ENCODE measurements at regions of chr14 and their contacts with region 1.

Region 1: DNA sequence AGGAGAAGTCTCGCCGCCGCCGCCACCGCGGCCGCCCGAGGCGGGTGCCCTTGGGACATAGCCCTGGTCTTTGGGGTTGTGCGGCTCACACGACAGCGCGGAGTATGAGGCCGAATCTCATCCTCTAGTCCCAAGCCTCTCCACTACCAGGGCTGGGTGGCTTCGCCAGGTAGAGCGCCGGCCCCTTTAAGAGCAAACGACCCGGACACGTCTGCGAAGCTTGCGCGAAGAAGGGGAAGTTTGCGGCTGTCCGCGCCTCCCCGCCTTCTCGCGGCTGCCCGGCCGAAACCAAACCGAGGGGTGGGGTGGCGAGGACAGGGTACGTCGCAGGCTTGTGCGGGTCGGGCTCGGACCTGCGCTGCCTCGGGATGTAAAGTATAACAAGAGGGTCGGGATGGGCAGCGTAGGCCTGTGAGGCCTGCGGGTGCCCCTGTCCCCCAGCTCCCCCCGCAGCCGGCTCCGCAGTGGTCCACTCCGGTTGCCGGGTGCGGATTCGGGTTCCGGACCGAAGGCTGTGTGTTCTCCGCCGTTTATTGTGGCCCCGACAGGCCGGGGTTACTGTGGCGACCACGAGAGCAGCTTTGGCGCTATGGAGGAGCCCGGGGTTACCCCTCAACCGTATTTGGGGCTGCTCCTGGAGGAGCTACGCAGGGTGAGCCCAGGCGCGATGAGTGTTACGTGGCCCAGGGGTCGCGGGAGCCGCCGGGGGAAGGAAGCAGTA is 33.3 kb downstream of the MIA2 start:
- DNase-seq: no peak
- ATAC-seq: peak; percentile 92
- H3K4me3 ChIP-seq: peak overlapping the region; percentile 92
- H3K27ac ChIP-seq: peak overlapping the region; percentile 93
- H3K4me1 ChIP-seq: peaks cover 9% of the 10 kb centered on the region
- H3K27me3 ChIP-seq: no peaks in the 10 kb centered on the region
- CTCF ChIP-seq: no peak
- EP300 ChIP-seq: peak in 1 of 2 experiments; percentile 29; a peak in 1 of 4 replicates
- POLR2A ChIP-seq: peak; percentile 82
- RAD21 ChIP-seq: no peak

Region 2: GRCh38 chr14:39114073-39114838 is 152.8 kb before region 1 on chr14 and contains the start of gene GEMIN2:
- CTCF ChIA-PET with region 1: interaction called, 3 read pairs
- POLR2A ChIA-PET with region 1: no interaction called
- RAD21 ChIA-PET with region 1: no interaction called
- SMC1A ChIA-PET with region 1: no interaction called
- in situ Hi-C with region 1: no loop called
- intact Hi-C with region 1: loop called (anchors 10 kb)
- DNase-seq: peak; percentile 89
- ATAC-seq: peak; percentile 94
- H3K4me3 ChIP-seq: peak within 1 kb of the TSS; percentile 73
- H3K27ac ChIP-seq: peak within 1 kb of the TSS; percentile 64
- H3K4me1 ChIP-seq: peaks cover 15% of the 10 kb centered on the region
- H3K27me3 ChIP-seq: no peaks in the 10 kb centered on the region
- CTCF ChIP-seq: no peak
- EP300 ChIP-seq: no peak
- POLR2A ChIP-seq: peak; percentile 91
- RAD21 ChIP-seq: no peak
- polyA plus RNA-seq, gene GEMIN2: 51.5 to 69.3 TPM

Region 3: DNA sequence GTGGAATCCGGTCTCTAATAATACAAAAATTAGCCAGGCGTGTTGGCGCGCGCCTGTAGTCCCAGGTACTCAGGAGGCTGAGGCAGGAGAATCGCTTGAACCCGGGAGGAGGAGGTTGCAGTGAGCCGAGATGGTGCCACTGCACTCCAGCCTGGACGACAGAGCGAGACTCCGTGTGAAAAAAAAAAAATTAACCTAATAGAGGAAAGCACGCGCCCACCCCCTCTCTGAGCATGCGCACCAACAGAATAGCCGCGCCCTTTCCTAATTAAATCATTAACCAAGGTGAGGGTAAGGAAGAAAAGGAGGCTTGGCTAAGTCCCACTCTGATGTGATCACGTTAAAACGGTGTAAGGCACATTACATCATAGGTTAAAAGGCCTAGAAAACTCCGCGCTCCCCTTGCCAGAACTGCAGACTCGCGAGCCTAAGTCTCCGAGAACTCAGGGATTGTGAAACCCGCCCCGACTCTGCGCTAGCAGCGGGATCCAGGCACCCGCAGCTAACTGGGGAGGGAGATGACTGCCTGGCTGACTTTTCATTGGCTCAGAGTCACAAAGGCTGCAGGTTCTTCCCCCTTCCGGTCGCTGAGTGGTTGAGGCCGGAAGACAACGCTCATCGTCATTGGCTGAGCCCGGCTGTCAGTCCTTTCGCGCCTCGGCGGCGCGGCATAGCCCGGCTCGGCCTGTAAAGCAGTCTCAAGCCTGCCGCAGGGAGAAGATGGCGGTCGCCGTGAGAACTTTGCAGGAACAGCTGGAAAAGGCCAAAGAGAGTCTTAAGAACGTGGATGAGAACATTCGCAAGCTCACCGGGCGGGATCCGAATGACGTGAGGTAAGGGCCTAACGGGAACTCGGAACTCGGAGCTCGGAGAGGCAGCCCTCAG is 92.2 kb before region 1 on chr14 and contains the start of gene PNN:
- CTCF ChIA-PET with region 1: no interaction called
- POLR2A ChIA-PET with region 1: interaction called, 3 read pairs
- RAD21 ChIA-PET with region 1: interaction called, 5 read pairs
- SMC1A ChIA-PET with region 1: interaction called, 4 read pairs
- in situ Hi-C with region 1: no loop called
- intact Hi-C with region 1: loop called (anchors 2 kb)
- DNase-seq: peak; percentile 99
- ATAC-seq: peak; percentile 93
- H3K4me3 ChIP-seq: peak within 1 kb of the TSS; percentile 90
- H3K27ac ChIP-seq: peak within 1 kb of the TSS; percentile 90
- H3K4me1 ChIP-seq: peaks cover 7% of the 10 kb centered on the region
- H3K27me3 ChIP-seq: no peaks in the 10 kb centered on the region
- CTCF ChIP-seq: no peak
- EP300 ChIP-seq: no peak; a peak in 1 of 4 replicates
- POLR2A ChIP-seq: peak; percentile 96
- RAD21 ChIP-seq: no peak
- polyA plus RNA-seq, gene PNN: 44.2 to 55.4 TPM

Region 4: GRCh38 chr14:39243822-39244221 is 23.2 kb before region 1 on chr14:
- CTCF ChIA-PET with region 1: interaction called, 3 read pairs
- POLR2A ChIA-PET with region 1: no interaction called
- RAD21 ChIA-PET with region 1: no interaction called
- SMC1A ChIA-PET with region 1: interaction called, 4 read pairs
- in situ Hi-C with region 1: no loop called
- intact Hi-C with region 1: loop called (anchors 2 kb)
- DNase-seq: no peak
- ATAC-seq: no peak
- H3K4me3 ChIP-seq: no peak overlapping the region
- H3K27ac ChIP-seq: no peak overlapping the region
- H3K4me1 ChIP-seq: no peaks in the 10 kb centered on the region
- H3K27me3 ChIP-seq: no peaks in the 10 kb centered on the region
- CTCF ChIP-seq: no peak
- EP300 ChIP-seq: no peak
- POLR2A ChIP-seq: no peak
- RAD21 ChIP-seq: no peak

Region 5: DNA sequence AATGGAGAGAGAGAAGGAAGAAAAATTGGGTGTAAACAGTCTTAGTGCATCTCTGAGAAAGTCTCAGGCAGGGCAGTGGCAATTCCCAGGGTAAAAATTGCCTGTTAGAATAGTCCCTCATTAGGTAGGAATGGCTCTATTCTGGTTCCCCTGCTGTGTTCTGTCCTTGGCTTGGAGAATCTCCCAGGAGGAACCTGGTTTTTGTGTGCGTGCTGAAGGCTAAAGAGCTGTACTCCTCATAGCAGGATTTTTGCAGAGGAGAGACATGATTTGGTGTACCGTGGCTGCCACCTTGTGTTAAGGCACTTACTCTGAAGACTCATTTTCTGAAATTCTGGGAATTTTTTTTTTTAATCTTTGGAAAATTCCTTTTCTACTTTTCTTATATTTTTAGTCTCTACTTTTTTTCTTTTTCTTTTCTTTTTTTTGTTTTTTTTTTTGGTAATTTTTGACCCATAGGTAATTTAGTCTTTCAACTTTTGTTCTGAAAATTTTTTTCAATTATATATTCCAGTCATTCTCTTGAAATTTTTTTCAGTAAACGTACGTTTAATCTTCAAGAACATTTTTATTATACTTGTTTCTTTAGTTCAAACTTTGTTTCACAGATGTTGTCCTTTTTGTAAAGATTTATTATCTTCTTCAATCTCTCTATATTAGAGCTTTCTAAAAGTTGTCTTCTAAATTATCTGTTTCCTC is 101.4 kb after region 1 on chr14:
- CTCF ChIA-PET with region 1: no interaction called
- POLR2A ChIA-PET with region 1: no interaction called
- RAD21 ChIA-PET with region 1: no interaction called
- SMC1A ChIA-PET with region 1: no interaction called
- in situ Hi-C with region 1: no loop called
- intact Hi-C with region 1: no loop called
- DNase-seq: no peak
- ATAC-seq: peak; percentile 46; the same call in 2 of the 3 replicates
- H3K4me3 ChIP-seq: no peak overlapping the region
- H3K27ac ChIP-seq: no peak overlapping the region
- H3K4me1 ChIP-seq: no peaks in the 10 kb centered on the region
- H3K27me3 ChIP-seq: no peaks in the 10 kb centered on the region
- CTCF ChIP-seq: peak; percentile 31 to 61 (median 37); a peak in 5 of 6 replicates
- EP300 ChIP-seq: no peak
- POLR2A ChIP-seq: no peak
- RAD21 ChIP-seq: peak; percentile 84

Measured in GM12878 (cell line).